Dorsolateral prefrontal cortex (tissue), 120 donors: ENCODE measurements at regions of chr13 and their contacts with region 1.

Region 1: GRCh38 chr13:107205303-107206104 is 637.6 kb upstream of the ARGLU1 start:
- DNase-seq: peak; percentile 62 to 89 (median 76)
- H3K4me3 ChIP-seq: peak overlapping the region in 11 of 59 donors; percentile 0 to 27 (median 13)
- H3K27ac ChIP-seq: peak overlapping the region in 2 of 59 donors; percentile 34 to 40
- H3K27me3 ChIP-seq: no peaks in the 10 kb centered on the region
- CTCF ChIP-seq: peak; percentile 91 to 100 (median 97)

Region 2: DNA sequence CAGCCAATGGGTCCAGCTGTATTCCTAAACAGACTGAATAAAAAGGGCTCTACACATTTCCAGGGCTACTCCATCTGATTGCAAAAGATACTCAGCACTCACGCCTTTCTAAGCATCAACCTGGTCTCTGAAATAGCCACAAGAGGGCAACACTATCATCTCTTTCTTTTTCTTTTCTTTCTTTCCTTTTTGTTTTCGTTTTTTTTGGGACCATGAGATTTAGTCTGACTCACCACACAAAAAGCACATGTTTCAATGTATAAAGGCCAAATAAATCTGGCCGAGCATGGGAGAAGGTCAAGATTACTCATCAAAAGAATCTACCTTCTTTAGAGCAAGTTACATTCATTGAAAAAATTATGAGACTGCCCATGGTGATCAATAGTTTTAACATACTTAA is 168.0 kb after region 1 on chr13:
- intact Hi-C with region 1: loop called in 1 of 2 experiments (anchors 5 kb)
- DNase-seq: no peak
- H3K4me3 ChIP-seq: peak overlapping the region in 23 of 59 donors; percentile 3 to 35 (median 15)
- H3K27ac ChIP-seq: peak overlapping the region in 1 of 59 donors; percentile 4
- H3K27me3 ChIP-seq: no peaks in the 10 kb centered on the region
- CTCF ChIP-seq: peak; percentile 30 to 82 (median 68)

Region 3: GRCh38 chr13:107387525-107387924 is 182.0 kb after region 1 on chr13:
- intact Hi-C with region 1: no loop called
- DNase-seq: no peak
- H3K4me3 ChIP-seq: no peak overlapping the region
- H3K27ac ChIP-seq: no peak overlapping the region
- H3K27me3 ChIP-seq: no peaks in the 10 kb centered on the region
- CTCF ChIP-seq: no peak

Region 4: DNA sequence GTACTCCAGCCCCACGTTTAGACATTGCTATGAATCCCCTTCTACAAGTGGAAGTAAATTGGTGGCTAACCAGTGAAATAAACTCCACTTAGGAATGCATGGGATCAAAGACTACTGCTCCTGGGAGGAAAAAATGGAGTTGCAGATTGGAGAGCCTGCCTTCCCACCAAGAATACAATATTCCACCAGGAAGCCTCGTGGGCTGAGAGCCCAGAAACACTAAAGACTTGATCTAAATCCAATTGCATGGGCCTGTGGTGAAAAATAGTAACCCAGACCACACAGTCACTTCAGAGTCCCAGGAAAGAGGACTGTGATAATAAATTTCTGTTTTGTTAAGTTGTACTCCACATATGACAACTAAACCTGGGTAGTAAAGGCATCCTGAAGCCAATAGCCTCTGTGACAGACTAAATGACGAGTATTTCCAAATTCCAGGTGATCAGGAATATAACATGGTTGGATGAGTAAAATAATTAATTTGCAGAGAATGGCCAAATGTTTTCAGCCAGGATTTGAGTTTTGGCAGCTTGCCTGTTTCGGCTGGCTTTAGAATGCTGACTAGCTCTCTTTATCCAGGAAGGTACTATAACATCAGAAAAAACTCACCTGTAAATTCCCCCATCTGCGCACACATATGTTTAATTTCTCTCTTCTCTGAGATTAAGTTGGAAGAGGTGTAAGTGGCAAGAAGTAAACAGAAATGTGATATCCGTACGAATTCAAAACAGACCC is 529.6 kb after region 1 on chr13:
- intact Hi-C with region 1: no loop called
- DNase-seq: peak in 1 of 10 donors; percentile 68
- H3K4me3 ChIP-seq: no peak overlapping the region
- H3K27ac ChIP-seq: no peak overlapping the region
- H3K27me3 ChIP-seq: no peaks in the 10 kb centered on the region
- CTCF ChIP-seq: no peak